ENCODE measurements at regions of chr1 and their contacts with region 1.

Region 1: GRCh38 chr1:183234660-183235476 is 48.8 kb downstream of the LAMC2 start:
- DNase-seq: peak; percentile 99
- H3K4me3 ChIP-seq: no peak overlapping the region
- H3K27ac ChIP-seq: peak overlapping the region; percentile 75
- H3K4me1 ChIP-seq: peaks cover 81% of the 10 kb centered on the region
- H3K27me3 ChIP-seq: no peaks in the 10 kb centered on the region
- CTCF ChIP-seq: peak; percentile 49 to 66

Region 2: GRCh38 chr1:183195142-183195574 is 39.7 kb before region 1 on chr1:
- CTCF ChIA-PET with region 1: interaction called, 3 read pairs
- dilution Hi-C with region 1: no loop called
- in situ Hi-C with region 1: no loop called
- intact Hi-C with region 1: loop called (anchors 1 kb)
- DNase-seq: peak; percentile 80
- H3K4me3 ChIP-seq: no peak overlapping the region
- H3K27ac ChIP-seq: peak overlapping the region; percentile 68
- H3K4me1 ChIP-seq: peaks cover 65% of the 10 kb centered on the region
- H3K27me3 ChIP-seq: no peaks in the 10 kb centered on the region
- CTCF ChIP-seq: no peak

Region 3: DNA sequence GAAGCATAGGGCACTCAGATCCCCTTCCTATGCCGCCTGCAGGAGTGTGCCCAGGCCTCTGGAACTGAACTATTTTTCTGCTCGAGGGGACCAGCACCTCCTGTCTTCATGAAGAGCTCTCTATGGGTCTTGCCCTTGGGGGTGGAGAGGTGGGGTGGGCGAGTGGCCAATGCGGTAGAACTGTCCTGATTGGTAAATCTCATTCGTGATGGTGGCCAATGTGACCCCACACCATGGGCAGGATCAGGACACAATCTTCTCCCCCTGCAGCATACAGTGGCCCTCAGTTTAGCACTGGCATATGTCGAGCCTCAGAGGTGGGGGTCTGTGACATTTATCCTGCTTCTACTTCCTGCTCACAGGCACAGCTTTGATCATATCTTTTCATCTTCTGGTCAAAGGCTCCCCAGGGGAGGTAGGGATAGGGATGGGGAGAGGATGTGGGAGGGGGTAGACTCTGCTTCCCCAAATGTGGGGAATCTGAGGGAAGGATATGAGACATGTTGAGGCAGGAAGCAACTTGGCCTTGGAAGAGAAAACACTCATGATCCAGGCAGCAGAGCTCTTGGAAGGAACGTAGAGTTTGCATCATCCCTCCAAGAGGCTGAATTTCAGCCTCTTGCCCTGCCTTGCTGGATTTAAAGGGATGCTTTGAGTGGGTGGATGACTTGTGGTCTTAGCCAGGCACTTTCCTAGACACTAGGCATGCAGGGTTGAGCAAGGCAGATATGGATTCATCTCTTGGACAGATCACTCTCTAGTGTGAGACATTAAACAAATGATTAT is 33.0 kb after region 1 on chr1:
- CTCF ChIA-PET with region 1: interaction called, 3 read pairs
- dilution Hi-C with region 1: no loop called
- in situ Hi-C with region 1: no loop called
- intact Hi-C with region 1: loop called (anchors 1 kb)
- DNase-seq: peak; percentile 98
- H3K4me3 ChIP-seq: no peak overlapping the region
- H3K27ac ChIP-seq: peak overlapping the region; percentile 69
- H3K4me1 ChIP-seq: peaks cover 57% of the 10 kb centered on the region
- H3K27me3 ChIP-seq: no peaks in the 10 kb centered on the region
- CTCF ChIP-seq: no peak

Region 4: GRCh38 chr1:183306317-183307042 is 71.6 kb after region 1 on chr1:
- CTCF ChIA-PET with region 1: no interaction called
- dilution Hi-C with region 1: no loop called
- in situ Hi-C with region 1: no loop called
- intact Hi-C with region 1: no loop called
- DNase-seq: no peak
- H3K4me3 ChIP-seq: no peak overlapping the region
- H3K27ac ChIP-seq: no peak overlapping the region
- H3K4me1 ChIP-seq: peaks cover 21% of the 10 kb centered on the region
- H3K27me3 ChIP-seq: no peaks in the 10 kb centered on the region
- CTCF ChIP-seq: peak; percentile 39 to 44

Region 5: GRCh38 chr1:183318433-183318832 is 83.6 kb after region 1 on chr1:
- CTCF ChIA-PET with region 1: no interaction called
- dilution Hi-C with region 1: no loop called
- in situ Hi-C with region 1: no loop called
- intact Hi-C with region 1: loop called (anchors 1 kb)
- DNase-seq: peak; percentile 88
- H3K4me3 ChIP-seq: no peak overlapping the region
- H3K27ac ChIP-seq: no peak overlapping the region
- H3K4me1 ChIP-seq: peaks cover 25% of the 10 kb centered on the region
- H3K27me3 ChIP-seq: no peaks in the 10 kb centered on the region
- CTCF ChIP-seq: peak; percentile 60 to 87

Region 6: GRCh38 chr1:183404456-183404855 is 169.6 kb after region 1 on chr1:
- CTCF ChIA-PET with region 1: no interaction called
- dilution Hi-C with region 1: no loop called
- in situ Hi-C with region 1: no loop called
- intact Hi-C with region 1: no loop called
- DNase-seq: no peak
- H3K4me3 ChIP-seq: no peak overlapping the region
- H3K27ac ChIP-seq: no peak overlapping the region
- H3K4me1 ChIP-seq: no peaks in the 10 kb centered on the region
- H3K27me3 ChIP-seq: no peaks in the 10 kb centered on the region
- CTCF ChIP-seq: no peak

Region 7: DNA sequence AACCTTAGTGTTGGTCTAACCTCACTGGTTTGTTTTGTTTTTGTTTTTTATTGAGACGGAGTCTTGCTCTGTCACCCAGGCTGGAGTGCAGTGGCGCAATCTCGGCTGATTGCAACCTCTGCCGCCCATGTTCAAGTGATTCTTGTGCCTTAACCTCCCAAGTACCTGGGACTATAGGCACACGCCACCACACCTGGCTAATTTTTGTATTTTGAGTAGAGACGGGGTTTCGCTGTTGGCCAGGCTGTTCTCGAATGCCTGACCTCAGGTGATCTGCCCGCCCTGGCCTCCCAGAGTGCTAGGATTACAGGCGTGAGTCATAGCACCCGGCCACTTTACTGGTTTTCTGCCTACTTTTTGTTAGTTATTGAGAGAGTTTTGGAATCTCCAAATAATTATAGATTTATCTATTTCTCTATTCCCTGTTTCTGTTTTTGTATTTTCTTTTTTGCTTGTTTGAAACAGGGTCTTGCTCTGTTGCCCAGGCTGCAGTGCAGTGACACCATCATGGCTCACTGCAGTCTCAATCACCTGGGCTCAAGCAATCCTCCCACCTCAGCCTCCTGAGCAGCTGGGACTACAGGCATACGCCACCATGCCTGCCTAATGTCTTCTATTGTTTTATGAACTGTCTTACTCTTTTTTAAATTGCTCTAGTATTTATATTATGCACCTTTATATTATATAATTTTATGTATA is 258.8 kb after region 1 on chr1:
- CTCF ChIA-PET with region 1: no interaction called
- dilution Hi-C with region 1: no loop called
- in situ Hi-C with region 1: no loop called
- intact Hi-C with region 1: no loop called
- DNase-seq: no peak
- H3K4me3 ChIP-seq: no peak overlapping the region
- H3K27ac ChIP-seq: no peak overlapping the region
- H3K4me1 ChIP-seq: no peaks in the 10 kb centered on the region
- H3K27me3 ChIP-seq: no peaks in the 10 kb centered on the region
- CTCF ChIP-seq: no peak

Measured in mammary epithelial cell (primary cell).